ENCODE measurements at regions of chr2 and their contacts with region 1.

Region 1: DNA sequence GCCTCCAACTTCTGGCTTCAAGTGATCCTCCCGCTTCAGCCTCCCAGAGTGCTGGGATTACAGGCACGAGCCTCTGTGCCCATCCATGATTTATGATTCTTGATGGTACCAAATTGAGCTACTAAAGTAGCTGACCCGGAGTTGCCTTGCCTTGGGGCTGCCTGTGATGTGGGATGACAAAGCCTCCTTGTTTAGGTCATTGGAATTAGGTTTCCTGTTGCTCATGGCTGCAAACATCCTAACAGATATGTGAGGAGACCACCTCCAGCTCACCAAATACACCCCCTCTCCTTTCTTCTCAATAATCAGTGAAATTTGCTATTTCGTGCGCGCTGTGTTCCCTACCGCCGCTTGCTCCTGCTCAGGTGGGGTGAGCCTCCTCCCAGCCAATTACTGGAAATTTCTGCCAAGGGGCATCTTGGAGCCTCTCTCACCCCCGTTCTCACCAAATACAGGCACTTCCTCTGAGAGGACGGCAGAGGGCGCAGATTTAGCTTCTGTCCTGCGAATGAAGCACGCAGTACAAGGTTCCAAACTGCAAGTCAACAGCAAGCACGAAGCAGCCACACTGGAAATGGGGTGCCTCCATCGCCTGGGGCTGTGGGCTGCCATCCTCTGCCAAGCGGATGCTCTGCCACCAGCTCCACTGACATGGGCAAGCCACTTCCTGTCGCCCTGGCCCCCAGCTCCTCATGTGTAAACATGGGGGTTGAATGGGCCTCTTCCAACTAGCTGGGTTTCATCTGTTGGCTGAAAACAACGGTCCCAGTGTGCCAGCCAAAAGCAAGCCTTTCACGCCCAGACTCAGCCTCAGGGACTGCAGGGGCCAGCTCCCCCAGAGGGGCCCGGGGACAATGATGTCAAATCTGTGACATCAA is 71.7 kb downstream of the NCAPH start:
- DNase-seq: peak; percentile 82
- ATAC-seq: peak; percentile 92
- H3K4me3 Mint-ChIP-seq: peak overlapping the region; percentile 57
- H3K27ac Mint-ChIP-seq: peak overlapping the region; percentile 86
- H3K4me1 Mint-ChIP-seq: peaks cover 24% of the 10 kb centered on the region
- H3K27me3 Mint-ChIP-seq: no peaks in the 10 kb centered on the region

Region 2: DNA sequence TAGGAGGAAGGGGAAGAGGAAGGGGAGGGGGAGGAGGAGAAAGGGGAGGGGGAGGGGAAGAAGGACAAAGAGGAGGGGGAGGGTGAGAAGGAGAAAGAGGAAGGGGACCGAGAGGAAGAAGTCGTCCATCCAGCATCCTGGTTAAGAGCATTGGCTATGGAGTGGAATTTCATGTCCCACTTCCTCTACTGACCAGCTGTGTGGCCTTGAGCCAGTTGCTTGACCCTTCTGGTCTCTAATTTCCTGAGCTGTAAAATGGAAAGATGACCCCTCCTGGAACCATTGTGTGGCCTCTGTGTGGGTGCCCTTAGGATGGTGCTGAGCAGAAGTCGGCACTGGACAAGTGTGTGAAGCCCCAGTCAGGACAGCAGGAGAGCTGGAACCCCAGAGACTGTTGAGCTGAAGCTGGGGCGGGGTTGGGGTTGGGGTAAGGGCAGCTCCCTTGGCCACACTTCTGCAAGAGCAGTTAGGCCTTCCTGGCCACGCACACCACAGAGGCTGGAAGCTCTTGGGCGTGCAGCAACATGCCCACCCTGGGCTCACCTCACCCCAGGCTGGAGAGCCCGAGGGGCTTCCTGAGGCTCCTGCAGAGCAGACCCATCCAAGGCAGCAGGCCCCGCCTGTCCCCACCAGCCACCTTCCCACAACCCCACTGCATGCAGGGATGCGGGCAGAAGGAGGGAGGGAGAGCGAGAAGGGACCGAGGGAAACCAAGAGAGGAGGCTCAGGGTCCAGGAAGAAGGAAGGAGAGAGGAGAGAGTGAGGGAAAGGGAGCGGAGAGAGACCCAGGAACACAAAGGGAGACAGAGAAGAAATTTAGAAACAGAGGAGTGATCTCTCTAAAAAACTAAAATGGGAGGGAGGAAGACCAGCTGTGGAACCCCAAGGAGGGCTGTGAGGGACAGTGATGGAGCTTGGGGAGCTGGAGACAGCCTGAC is 307.1 kb before region 1 on chr2:
- CTCF ChIA-PET with region 1: no interaction called
- POLR2A ChIA-PET with region 1: no interaction called
- DNase-seq: no peak
- ATAC-seq: no peak
- H3K4me3 Mint-ChIP-seq: no peak overlapping the region
- H3K27ac Mint-ChIP-seq: no peak overlapping the region
- H3K4me1 Mint-ChIP-seq: peaks cover 7% of the 10 kb centered on the region
- H3K27me3 Mint-ChIP-seq: no peaks in the 10 kb centered on the region

Region 3: GRCh38 chr2:96208143-96209010 is 198.9 kb before region 1 on chr2 and contains the start of gene STARD7:
- CTCF ChIA-PET with region 1: no interaction called
- POLR2A ChIA-PET with region 1: no interaction called
- DNase-seq: peak; percentile 98
- ATAC-seq: peak; percentile 92
- H3K4me3 Mint-ChIP-seq: peak within 1 kb of the TSS; percentile 87
- H3K27ac Mint-ChIP-seq: peak within 1 kb of the TSS; percentile 86
- H3K4me1 Mint-ChIP-seq: peaks cover 55% of the 10 kb centered on the region
- H3K27me3 Mint-ChIP-seq: no peaks in the 10 kb centered on the region
- total RNA-seq, gene STARD7: 139 to 143 TPM

Region 4: GRCh38 chr2:96423828-96424227 is 16.5 kb after region 1 on chr2:
- CTCF ChIA-PET with region 1: interaction called, 24 read pairs
- POLR2A ChIA-PET with region 1: no interaction called
- DNase-seq: no peak
- ATAC-seq: no peak
- H3K4me3 Mint-ChIP-seq: no peak overlapping the region
- H3K27ac Mint-ChIP-seq: no peak overlapping the region
- H3K4me1 Mint-ChIP-seq: peaks cover 5% of the 10 kb centered on the region
- H3K27me3 Mint-ChIP-seq: peaks cover 33% of the 10 kb centered on the region

Region 5: GRCh38 chr2:96495982-96496629 is 88.8 kb after region 1 on chr2:
- CTCF ChIA-PET with region 1: interaction called, 13 read pairs
- POLR2A ChIA-PET with region 1: no interaction called
- DNase-seq: no peak
- ATAC-seq: no peak
- H3K4me3 Mint-ChIP-seq: no peak overlapping the region
- H3K27ac Mint-ChIP-seq: peak overlapping the region; percentile 10
- H3K4me1 Mint-ChIP-seq: peaks cover 20% of the 10 kb centered on the region
- H3K27me3 Mint-ChIP-seq: no peaks in the 10 kb centered on the region

Region 6: GRCh38 chr2:96520231-96520630 is 113.0 kb after region 1 on chr2:
- CTCF ChIA-PET with region 1: interaction called, 19 read pairs
- POLR2A ChIA-PET with region 1: no interaction called
- DNase-seq: no peak
- ATAC-seq: no peak
- H3K4me3 Mint-ChIP-seq: no peak overlapping the region
- H3K27ac Mint-ChIP-seq: no peak overlapping the region
- H3K4me1 Mint-ChIP-seq: peaks cover 33% of the 10 kb centered on the region
- H3K27me3 Mint-ChIP-seq: peaks cover 2% of the 10 kb centered on the region

Region 7: DNA sequence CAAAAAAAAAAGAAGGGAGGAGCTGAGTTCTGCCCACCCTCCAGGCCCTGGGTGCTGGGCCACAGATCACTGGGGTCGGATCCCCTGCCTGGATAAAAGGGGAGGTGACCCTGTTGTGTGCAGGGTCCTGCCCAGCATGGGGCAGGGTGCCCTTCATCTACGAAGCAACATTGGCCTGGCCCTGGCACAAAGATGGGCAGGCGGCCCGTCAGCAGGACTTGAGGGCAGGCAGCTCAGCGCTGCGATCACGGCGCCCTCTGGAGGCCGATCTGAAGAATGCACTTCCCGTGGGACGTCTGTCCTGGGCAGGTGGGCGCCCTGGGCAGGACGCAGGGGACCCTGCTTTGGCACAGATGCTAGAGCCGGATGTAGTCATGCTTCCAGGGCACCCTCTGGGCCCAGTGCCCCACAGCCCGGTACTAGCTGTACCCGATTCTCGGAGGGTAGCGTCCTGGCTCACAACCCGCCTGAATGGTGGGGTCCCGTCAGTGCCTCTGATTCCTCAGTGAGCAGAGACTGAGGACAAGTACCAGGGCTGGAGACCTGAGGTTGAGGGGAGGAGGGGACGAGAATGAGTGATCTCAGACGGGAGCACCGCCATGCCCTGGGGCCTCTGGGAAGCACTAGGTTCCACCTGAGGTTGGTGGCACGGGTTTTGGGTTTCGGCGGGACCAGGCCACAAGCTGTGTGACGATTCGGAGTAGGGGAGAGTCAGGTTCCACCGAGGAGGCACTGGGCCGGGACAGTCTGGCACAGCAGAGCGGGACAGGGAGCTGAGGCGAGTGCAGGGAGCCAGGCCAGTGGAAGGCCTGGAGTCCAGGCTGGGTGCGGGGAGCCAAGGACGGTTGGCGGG is 147.2 kb after region 1 on chr2:
- CTCF ChIA-PET with region 1: interaction called, 67 read pairs
- POLR2A ChIA-PET with region 1: no interaction called
- DNase-seq: peak; percentile 73
- ATAC-seq: peak; percentile 77
- H3K4me3 Mint-ChIP-seq: no peak overlapping the region
- H3K27ac Mint-ChIP-seq: peak overlapping the region; percentile 43
- H3K4me1 Mint-ChIP-seq: peaks cover 25% of the 10 kb centered on the region
- H3K27me3 Mint-ChIP-seq: no peaks in the 10 kb centered on the region

Region 8: DNA sequence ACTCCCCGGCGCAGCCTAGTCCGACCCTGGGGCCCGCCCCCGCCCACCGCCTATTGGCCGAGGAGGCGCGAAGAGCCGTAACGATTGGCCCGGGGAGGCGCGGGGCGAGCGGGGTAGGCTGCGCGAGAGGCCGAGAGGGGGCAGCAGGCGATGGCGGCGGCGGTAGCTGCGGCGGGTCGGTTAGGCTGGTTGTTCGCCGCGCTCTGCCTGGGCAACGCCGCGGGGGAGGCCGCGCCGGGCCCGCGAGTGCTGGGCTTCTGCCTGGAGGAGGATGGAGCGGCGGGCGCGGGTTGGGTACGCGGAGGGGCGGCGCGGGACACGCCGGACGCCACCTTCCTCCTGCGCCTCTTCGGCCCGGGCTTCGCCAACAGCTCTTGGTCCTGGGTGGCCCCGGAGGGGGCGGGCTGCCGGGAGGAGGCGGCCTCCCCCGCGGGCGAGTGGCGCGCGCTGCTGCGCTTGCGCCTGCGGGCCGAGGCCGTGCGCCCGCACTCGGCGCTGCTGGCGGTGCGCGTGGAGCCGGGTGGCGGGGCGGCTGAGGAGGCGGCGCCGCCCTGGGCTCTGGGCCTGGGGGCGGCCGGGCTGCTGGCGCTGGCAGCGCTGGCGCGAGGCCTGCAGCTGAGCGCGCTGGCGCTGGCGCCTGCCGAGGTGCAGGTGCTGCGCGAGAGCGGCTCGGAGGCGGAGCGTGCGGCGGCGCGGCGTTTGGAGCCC is 409.0 kb after region 1 on chr2 and contains the start of gene CNNM3:
- CTCF ChIA-PET with region 1: no interaction called
- POLR2A ChIA-PET with region 1: no interaction called
- DNase-seq: peak; percentile 96
- ATAC-seq: peak; percentile 95
- H3K4me3 Mint-ChIP-seq: peak within 1 kb of the TSS; percentile 89
- H3K27ac Mint-ChIP-seq: peak within 1 kb of the TSS; percentile 71
- H3K4me1 Mint-ChIP-seq: peaks cover 53% of the 10 kb centered on the region
- H3K27me3 Mint-ChIP-seq: no peaks in the 10 kb centered on the region
- total RNA-seq, gene CNNM3: 28.1 to 29.9 TPM

Measured in activated CD8-positive, alpha-beta T cell treated with anti-CD3 and anti-CD28 coated beads, Interleukin-2, amount 10 ng/mL, durations not matched to agents 7 days and 5 days (primary cell).